ENCODE measurements at regions of chr1 and their contacts with region 1.

Region 1: GRCh38 chr1:203486618-203487370 is 7.2 kb upstream of the OPTC start:
- DNase-seq: no peak

Region 2: GRCh38 chr1:203340112-203340804 is 146.5 kb before region 1 on chr1:
- intact Hi-C with region 1: loop called (anchors 1 kb)
- DNase-seq: peak; percentile 83

Region 3: DNA sequence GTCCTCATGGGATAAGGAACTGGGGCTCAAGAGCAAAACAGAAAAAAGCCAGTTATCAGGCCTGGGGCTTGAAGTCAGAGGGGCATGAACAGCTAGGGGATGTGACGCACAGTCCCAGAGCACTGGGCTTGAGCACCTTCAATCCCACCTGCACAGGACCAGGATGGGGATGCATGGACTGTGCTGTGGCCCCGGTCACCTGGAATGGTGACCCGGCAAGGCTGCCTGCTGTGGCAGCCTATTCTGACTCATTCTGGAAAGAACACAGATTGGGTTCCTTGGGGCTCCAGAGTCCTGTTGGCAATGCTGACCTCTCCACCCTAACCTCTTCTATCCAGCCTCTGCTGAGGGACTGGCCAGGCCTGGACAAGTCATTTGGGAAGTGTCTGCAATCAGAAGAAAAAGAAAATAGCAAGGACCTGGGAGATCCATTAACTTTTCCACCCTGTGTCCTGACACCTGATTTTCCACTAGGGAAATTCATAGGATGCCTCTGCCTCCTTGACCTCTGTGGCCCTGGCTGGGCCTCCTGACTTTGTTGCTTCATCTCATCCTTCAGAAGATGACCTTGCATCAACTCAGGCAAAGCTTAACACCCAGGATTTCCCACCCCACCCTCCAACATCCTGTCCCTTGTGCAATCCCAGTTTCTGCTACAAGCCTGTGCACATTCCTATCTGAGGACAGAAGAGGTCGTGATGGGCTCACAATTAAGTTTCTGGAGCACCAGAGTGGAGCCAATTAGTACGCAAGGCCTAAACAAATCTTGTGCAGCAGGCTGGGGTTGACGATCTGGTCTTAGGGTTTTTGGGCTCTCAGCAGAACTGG is 118.0 kb before region 1 on chr1:
- intact Hi-C with region 1: loop called (anchors 2 kb)
- DNase-seq: no peak

Region 4: GRCh38 chr1:203558064-203558760 is 71.4 kb after region 1 on chr1:
- intact Hi-C with region 1: no loop called
- DNase-seq: no peak

Measured in cardiac septum (tissue), 1 donor.